CD8-positive, alpha-beta T cell (primary cell): ENCODE measurements at regions of chr14 and their contacts with region 1.

Region 1: DNA sequence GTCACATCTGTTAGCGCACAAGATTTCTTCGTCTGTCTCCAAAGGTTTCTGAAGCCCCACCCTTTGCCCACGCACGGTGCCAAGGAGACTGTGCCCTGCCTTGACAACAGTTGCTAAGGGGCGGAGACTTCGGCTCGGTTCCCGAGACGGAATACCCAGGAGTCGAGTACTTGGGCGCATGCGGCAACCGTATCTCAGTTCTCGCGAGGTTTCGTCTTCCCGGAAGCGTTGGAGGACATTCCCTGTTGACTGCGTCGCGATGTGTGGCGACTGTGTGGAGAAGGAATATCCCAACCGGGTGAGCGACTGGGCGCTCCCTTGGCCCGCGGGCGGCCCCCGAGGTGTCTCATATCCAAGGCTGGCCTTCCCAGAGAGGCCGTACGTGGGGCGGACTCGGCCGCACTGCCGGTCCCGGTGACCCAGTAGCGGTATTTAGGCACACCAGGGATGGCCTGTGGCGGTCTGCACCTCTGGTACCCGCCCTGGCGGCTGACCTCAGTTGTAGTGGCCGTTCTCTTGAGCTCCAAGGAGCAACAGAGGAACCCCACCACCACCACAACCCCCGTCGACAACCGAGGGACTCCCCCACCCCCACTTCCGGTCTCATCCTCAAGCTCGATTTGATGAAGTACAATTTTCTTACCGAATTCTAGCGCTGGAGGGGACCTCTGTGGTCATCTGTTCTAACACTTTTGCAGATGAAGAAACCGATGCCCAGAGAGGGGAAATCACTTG is at the start of gene CHURC1:
- DNase-seq: peak; percentile 91 to 99 (median 97)
- ATAC-seq: peak; percentile 92
- H3K4me3 ChIP-seq: peak within 1 kb of the TSS; percentile 86 to 98
- H3K4me3 Mint-ChIP-seq: peak within 1 kb of the TSS; percentile 85
- H3K27ac ChIP-seq: peak within 1 kb of the TSS; percentile 98 to 99
- H3K27ac Mint-ChIP-seq: peak within 1 kb of the TSS; percentile 91
- H3K4me1 ChIP-seq: peaks cover 42% of the 10 kb centered on the region
- H3K4me1 Mint-ChIP-seq: peaks cover 47% of the 10 kb centered on the region
- H3K27me3 ChIP-seq: no peaks in the 10 kb centered on the region
- H3K27me3 Mint-ChIP-seq: no peaks in the 10 kb centered on the region
- CTCF ChIP-seq: no peak
- total RNA-seq, gene CHURC1: 43.9 to 46.7 TPM

Region 2: GRCh38 chr14:64338616-64339316 is 575.6 kb before region 1 on chr14:
- CTCF ChIA-PET with region 1: no interaction called
- POLR2A ChIA-PET with region 1: no interaction called
- intact Hi-C with region 1: loop called in 1 of 2 experiments (anchors 5 kb)
- DNase-seq: peak; percentile 54 to 93 (median 85)
- ATAC-seq: peak; percentile 79
- H3K4me3 ChIP-seq: peak overlapping the region; percentile 67 to 87
- H3K4me3 Mint-ChIP-seq: peak overlapping the region; percentile 97
- H3K27ac ChIP-seq: peak overlapping the region; percentile 38 to 58
- H3K27ac Mint-ChIP-seq: peak overlapping the region; percentile 96
- H3K4me1 ChIP-seq: peaks cover 19% of the 10 kb centered on the region
- H3K4me1 Mint-ChIP-seq: peaks cover 26% of the 10 kb centered on the region
- H3K27me3 ChIP-seq: no peaks in the 10 kb centered on the region
- H3K27me3 Mint-ChIP-seq: no peaks in the 10 kb centered on the region
- CTCF ChIP-seq: no peak

Region 3: DNA sequence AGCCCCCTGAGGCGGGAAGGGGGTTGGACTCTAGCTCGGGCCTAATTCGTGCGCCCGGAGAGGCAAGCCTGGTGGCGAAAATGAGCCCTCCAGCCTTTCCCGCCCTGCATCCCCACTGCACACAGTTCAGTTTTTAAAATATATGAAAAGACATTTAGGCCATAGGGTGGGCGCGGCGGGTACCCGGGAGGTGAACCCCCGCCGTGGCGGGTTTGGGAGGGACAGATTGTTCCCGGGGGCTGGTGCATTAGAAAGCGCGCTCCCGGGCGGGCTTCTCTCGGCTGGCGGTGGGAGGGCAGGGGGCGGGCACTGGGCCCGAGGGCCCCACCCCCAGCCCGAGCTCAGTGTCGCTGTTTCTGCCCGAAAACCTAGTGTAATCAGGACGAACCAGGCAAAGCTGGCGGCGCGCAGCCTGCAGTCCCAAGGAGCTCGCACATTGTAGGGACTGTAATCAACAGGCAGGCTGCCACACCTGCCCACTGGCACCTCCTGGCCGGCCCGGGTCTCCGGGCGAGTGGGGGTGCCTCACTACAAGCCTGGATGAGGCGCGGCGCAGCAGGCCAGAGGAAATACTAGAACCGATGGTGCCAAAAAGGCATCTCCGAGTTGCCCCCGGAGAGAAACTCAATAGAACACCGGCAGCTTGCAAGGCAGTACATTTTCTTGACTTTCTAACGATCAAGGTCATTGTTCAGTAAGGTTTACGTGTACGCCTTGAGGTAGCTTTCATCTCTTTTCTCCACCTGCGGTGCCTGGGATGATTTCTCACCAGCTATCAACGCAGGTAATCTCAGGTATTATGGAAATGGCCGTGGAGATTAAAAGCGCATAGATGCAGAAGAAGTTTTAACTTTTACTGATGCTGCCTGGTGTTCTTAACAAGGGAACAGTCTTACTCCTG is 33.9 kb before region 1 on chr14:
- CTCF ChIA-PET with region 1: no interaction called
- POLR2A ChIA-PET with region 1: interaction called, 3 read pairs
- intact Hi-C with region 1: loop called in 1 of 2 experiments (anchors 1 kb)
- DNase-seq: peak; percentile 22 to 74 (median 59)
- ATAC-seq: peak; percentile 82
- H3K4me3 ChIP-seq: peak overlapping the region; percentile 51 to 62
- H3K4me3 Mint-ChIP-seq: peak overlapping the region; percentile 87
- H3K27ac ChIP-seq: no peak overlapping the region
- H3K27ac Mint-ChIP-seq: no peak overlapping the region
- H3K4me1 ChIP-seq: no peaks in the 10 kb centered on the region
- H3K4me1 Mint-ChIP-seq: peaks cover 8% of the 10 kb centered on the region
- H3K27me3 ChIP-seq: peaks cover 0 to 17% of the 10 kb centered on the region in 2 experiments
- H3K27me3 Mint-ChIP-seq: peaks cover 16% of the 10 kb centered on the region
- CTCF ChIP-seq: no peak

Region 4: GRCh38 chr14:64942531-64943111 is 28.2 kb after region 1 on chr14 and contains the start of gene GPX2:
- CTCF ChIA-PET with region 1: no interaction called
- POLR2A ChIA-PET with region 1: no interaction called
- intact Hi-C with region 1: no loop called
- DNase-seq: no peak
- ATAC-seq: no peak
- H3K4me3 ChIP-seq: no peak within 1 kb of the TSS
- H3K4me3 Mint-ChIP-seq: no peak within 1 kb of the TSS
- H3K27ac ChIP-seq: no peak within 1 kb of the TSS
- H3K27ac Mint-ChIP-seq: peak within 1 kb of the TSS; percentile 82
- H3K4me1 ChIP-seq: peaks cover 7% of the 10 kb centered on the region
- H3K4me1 Mint-ChIP-seq: peaks cover 67% of the 10 kb centered on the region
- H3K27me3 ChIP-seq: no peaks in the 10 kb centered on the region
- H3K27me3 Mint-ChIP-seq: no peaks in the 10 kb centered on the region
- CTCF ChIP-seq: no peak
- total RNA-seq, gene GPX2: not detected

Region 5: DNA sequence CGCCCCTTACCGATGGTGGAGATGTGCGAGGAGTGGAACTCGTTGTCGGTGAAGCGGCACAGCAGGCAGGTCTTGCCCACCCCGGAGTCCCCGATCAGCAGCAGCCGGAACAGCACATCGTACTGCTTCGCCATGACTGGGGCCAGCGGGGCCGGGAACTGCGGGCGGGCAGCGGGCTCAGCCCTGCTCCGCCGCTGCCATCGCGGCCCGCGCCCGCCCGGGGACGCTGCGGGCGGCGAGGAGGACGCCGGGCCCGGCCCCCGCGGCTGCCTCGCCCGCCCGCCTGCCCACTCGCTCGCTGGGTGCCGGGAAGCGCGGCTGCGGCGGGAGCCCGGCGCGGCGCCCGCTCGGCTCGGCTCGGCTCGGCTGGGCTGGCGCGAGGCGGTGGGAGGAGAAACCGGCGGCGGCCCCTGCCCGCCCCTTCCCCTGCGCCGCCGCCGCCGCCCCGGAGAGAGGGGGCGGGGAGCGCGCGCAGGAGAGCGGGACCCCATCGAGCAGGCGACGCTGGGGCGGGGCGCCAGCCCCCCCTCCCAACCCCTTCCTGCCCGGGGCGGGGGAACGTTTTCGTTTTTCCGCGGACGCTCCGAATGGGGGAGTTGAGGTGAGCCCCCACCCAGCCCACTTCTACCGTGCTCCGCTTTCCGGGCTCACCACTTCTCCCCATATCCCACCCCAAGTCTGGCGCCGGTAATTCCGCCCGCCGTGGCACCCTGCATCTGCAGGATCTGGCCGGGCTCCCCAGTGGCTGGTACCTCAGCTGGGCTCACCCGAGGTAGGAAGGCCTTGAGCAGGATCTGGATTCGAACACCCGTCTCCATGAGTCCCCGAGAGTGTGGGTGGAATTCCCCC is 57.8 kb after region 1 on chr14 and contains the start of gene RAB15:
- CTCF ChIA-PET with region 1: no interaction called
- POLR2A ChIA-PET with region 1: interaction called, 10 read pairs
- intact Hi-C with region 1: loop called in 1 of 2 experiments (anchors 1 kb)
- DNase-seq: peak in 8 of 9 experiments; percentile 7 to 67 (median 46)
- ATAC-seq: peak; percentile 68
- H3K4me3 ChIP-seq: peak within 1 kb of the TSS; percentile 54 to 73
- H3K4me3 Mint-ChIP-seq: peak within 1 kb of the TSS; percentile 83
- H3K27ac ChIP-seq: no peak within 1 kb of the TSS
- H3K27ac Mint-ChIP-seq: peak within 1 kb of the TSS; percentile 62
- H3K4me1 ChIP-seq: peaks cover 16% of the 10 kb centered on the region
- H3K4me1 Mint-ChIP-seq: peaks cover 27% of the 10 kb centered on the region
- H3K27me3 ChIP-seq: no peaks in the 10 kb centered on the region
- H3K27me3 Mint-ChIP-seq: no peaks in the 10 kb centered on the region
- CTCF ChIP-seq: no peak
- total RNA-seq, gene RAB15: 2.9 to 3.6 TPM